ENCODE measurements at regions of chr17 and their contacts with region 1.

Region 1: DNA sequence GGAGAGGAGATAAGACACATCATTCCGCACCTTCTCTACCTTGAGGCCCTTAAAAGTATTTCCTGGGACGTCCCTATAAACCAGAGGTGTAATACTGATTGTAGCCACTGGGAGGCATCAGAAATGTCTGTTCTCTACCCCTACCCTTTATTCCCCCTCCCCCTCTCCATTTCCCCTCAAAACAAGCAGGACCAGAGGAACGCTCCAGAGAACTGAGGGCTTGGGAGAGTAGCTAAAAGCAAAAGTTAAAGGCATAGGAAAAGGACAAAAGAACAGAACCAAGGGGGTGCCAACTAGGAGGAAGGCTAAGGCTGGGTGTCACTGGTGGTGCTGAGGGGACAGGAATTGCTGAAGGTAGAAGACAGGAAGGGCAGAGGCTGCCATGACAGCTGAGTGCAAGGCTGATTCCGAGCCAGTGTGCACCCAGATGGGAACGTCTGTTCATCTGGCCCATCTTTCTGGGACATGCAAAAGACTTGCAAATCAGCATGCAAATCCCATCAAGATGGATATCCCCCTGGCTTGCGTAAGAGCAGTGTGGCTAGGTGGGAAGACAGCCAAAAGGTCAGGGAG is 6.7 kb downstream of the CAMTA2 start:
- DNase-seq: no peak
- H3K4me3 ChIP-seq: no peak overlapping the region
- H3K27ac ChIP-seq: peak overlapping the region in 5 of 59 donors; percentile 9 to 21 (median 18)
- H3K27me3 ChIP-seq: no peaks in the 10 kb centered on the region
- CTCF ChIP-seq: peak; percentile 44 to 83 (median 72)

Region 2: DNA sequence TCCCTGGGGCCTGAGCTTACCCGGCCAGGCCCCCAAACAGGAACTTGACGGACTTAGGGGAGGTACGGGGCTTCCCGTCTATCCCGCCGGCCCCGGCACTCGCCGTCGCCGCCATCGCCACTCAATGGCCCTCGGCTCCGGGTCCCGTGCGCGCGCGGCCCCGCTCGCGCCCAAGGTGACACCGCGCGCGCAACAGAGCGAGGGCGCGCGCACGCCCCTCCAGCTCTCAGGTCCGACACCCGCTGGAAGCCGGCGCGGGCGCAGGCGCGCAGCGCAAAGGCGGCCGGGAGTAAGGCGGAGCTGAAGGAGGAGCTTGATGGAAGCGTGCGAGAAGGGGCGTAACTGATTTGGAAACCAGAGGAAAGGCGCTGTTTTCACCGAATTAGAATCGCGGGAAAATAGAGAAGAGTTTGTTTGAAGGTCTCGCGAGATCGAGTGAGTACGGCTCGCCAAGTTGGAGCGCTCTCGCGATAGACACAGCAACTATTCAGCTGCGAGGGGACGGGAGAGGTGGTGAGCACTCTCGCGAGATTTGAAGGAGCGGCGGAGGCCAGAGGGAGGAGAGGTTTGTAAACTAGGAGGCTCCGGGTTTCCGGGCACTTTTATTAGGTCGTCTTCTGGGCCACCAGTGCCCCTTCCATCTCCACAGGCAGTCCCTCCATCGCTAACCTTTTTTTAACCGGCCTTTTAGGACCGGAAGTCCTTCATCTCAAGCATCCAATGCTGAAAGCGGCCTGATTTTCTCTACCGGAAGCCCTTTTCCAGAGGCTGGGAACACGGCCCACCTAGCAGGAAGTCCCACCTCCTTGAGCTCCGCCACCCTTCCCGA is 40.7 kb before region 1 on chr17 and contains the starts of genes RNF167 and SLC25A11:
- intact Hi-C with region 1: loop called (anchors 5 kb)
- DNase-seq: peak; percentile 84 to 97 (median 94)
- H3K4me3 ChIP-seq: peak within 1 kb of the TSS; percentile 58 to 100 (median 93)
- H3K27ac ChIP-seq: peak within 1 kb of the TSS; percentile 87 to 100 (median 98)
- H3K27me3 ChIP-seq: no peaks in the 10 kb centered on the region
- CTCF ChIP-seq: peak in 31 of 56 donors; percentile 1 to 56 (median 25)
- total RNA-seq, gene RNF167: 65.3 to 121 (median 91.1) TPM
- total RNA-seq, gene SLC25A11: 56.8 to 113 (median 82.2) TPM

Region 3: DNA sequence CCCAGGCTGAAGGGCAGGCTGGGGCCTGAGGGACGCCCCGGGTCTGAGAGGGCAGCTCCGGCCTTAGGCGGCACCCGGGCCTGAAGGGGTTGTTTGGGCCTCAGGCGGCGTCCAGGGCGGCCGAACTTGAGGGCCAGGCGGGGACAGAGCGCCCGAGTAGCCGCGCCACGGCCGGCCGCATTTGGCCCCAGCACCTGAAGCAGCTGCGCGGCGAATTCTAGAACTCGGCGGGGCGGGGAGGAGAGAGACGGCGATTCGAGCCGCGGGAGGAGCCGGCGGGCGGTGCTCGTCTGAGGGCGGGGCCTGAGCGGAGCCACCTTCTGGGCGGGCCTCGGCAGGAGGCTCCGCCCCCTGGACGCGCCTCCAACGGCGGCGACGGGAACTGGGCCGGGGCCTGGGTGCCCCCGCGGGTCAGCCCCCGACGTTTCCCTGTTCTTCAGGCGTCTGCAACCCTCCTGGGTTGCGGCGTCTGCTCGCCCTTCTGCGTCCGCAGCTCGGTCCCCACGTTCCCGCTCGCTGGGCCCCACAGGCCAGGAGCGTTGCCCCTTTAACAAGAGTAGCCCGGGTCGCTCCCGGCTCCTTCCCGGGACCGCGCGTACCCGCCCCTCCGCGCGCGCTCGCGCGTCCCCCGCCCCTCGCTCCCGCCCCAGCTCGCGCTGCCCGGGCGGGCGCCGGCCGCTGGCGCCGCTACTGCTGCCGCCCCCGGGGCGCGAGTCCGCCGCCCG is 16.7 kb after region 1 on chr17 and contains the starts of genes INCA1 and KIF1C:
- intact Hi-C with region 1: no loop called
- DNase-seq: peak; percentile 85 to 97 (median 92)
- H3K4me3 ChIP-seq: peak within 1 kb of the TSS; percentile 65 to 99 (median 93)
- H3K27ac ChIP-seq: peak within 1 kb of the TSS; percentile 81 to 99 (median 95)
- H3K27me3 ChIP-seq: no peaks in the 10 kb centered on the region
- CTCF ChIP-seq: peak in 48 of 56 donors; percentile 8 to 68 (median 41)
- total RNA-seq, gene INCA1: 0.36 to 3.7 (median 2.0) TPM in 118 of 120 experiments, not detected in the others
- total RNA-seq, gene KIF1C: 62.4 to 504 (median 132) TPM

Region 4: GRCh38 chr17:5055543-5055942 is 74.8 kb after region 1 on chr17:
- intact Hi-C with region 1: loop called in 1 of 2 experiments (anchors 5 kb)
- DNase-seq: no peak
- H3K4me3 ChIP-seq: no peak overlapping the region
- H3K27ac ChIP-seq: no peak overlapping the region
- H3K27me3 ChIP-seq: no peaks in the 10 kb centered on the region
- CTCF ChIP-seq: no peak

Region 5: DNA sequence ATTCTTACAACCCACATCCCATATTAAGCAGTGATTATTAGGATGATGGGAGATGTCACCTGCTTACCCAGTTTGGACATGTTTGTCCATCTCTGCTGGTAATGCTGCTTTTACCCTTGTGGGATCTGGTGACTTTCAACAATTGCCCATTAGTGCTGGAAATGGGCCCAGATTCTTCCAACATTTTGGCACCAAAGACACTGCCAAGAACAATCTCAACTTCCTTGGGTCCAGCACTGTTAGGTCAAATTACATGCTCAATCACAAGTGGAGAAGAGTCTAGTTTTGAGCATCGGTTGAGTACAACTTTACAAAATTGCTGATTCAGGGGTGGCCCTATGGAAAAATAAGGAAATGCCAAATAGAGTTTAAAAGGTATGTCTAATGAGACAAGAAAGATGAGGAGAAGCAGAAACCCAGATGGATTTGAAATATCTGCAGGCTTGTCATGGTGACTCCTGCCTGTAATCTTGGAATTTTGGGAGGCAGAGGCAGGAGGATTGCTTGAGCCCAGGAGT is 84.6 kb after region 1 on chr17:
- intact Hi-C with region 1: loop called (anchors 2 to 5 kb)
- DNase-seq: no peak
- H3K4me3 ChIP-seq: no peak overlapping the region
- H3K27ac ChIP-seq: no peak overlapping the region
- H3K27me3 ChIP-seq: no peaks in the 10 kb centered on the region
- CTCF ChIP-seq: no peak

Measured in dorsolateral prefrontal cortex (tissue), 120 donors.